ENCODE measurements at regions of chr5 and their contacts with region 1.

Region 1: DNA sequence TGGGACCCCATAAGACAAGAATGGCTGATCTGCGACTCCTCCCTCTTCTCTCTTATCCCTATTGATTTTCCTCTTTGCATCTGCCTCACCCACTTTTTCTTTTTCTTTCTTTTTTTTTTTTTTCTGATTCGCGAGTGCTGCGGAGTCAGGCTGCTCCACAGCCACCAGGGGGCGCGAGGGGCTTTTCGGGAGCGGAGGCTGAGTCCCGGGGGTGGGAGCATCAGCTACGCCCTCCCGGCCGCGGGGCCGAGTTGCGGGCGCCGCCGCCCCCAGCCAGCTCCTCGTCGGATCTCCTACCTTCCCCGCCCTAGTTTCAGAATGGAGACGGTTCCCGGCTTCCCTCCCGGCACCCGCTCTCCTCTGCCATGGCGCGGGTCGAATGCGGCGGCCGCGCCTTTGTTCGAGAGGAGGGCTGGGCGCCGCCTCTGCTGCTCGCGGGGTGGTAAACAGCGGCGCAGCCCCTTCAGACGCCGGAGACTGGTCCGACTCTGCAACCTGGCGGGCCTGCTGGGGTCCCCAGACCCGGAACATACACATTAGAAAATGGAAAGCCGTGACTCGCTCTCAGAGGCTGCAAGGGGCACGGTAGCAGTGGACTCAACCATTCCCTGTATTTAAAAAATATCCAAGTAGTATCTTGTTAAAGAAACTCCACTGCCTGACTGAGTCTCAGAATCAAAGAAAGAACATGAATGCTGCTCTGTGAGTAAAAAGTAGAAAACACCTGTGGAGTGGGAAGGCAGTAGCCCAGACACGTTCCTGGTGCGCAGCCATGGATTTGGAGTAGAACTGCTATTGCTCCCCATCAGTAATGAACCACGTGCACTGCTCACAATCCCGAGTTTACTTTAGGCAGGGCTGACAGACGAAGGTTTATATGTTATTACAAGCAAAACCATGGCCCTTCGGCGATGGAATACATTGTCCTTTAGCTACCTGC is 55.7 kb downstream of the DPYSL3 start:
- DNase-seq: peak; percentile 50 to 90 (median 75)
- H3K4me3 ChIP-seq: peak overlapping the region; percentile 57 to 99 (median 77)
- H3K27ac ChIP-seq: peak overlapping the region in 53 of 59 donors; percentile 1 to 90 (median 75)
- H3K27me3 ChIP-seq: peaks cover 0 to 6% (median 0%) of the 10 kb centered on the region in 45 donors
- CTCF ChIP-seq: peak; percentile 65 to 96 (median 84)

Region 2: DNA sequence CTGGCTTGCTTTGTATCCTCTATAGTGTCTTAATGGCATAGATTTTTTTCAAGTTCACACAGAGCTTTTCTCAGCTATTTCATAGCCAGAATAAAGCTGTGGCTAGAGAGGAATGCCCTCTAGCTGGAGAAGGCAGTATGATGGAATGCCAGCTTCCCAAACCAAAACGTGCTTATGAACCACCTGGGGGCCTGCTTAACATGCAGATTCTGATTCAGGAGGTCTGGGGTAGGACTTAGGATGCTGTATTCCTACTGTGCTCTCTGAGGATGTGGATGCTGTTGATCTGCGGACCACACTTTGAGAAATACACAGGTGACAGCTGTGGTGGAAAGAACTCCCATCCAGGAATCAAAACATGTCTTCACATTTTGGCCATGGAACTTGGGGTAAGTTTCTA is 105.6 kb after region 1 on chr5:
- intact Hi-C with region 1: loop called (anchors 5 kb)
- DNase-seq: no peak
- H3K4me3 ChIP-seq: no peak overlapping the region
- H3K27ac ChIP-seq: no peak overlapping the region
- H3K27me3 ChIP-seq: no peaks in the 10 kb centered on the region
- CTCF ChIP-seq: peak in 13 of 56 donors; percentile 3 to 39 (median 15)

Region 3: DNA sequence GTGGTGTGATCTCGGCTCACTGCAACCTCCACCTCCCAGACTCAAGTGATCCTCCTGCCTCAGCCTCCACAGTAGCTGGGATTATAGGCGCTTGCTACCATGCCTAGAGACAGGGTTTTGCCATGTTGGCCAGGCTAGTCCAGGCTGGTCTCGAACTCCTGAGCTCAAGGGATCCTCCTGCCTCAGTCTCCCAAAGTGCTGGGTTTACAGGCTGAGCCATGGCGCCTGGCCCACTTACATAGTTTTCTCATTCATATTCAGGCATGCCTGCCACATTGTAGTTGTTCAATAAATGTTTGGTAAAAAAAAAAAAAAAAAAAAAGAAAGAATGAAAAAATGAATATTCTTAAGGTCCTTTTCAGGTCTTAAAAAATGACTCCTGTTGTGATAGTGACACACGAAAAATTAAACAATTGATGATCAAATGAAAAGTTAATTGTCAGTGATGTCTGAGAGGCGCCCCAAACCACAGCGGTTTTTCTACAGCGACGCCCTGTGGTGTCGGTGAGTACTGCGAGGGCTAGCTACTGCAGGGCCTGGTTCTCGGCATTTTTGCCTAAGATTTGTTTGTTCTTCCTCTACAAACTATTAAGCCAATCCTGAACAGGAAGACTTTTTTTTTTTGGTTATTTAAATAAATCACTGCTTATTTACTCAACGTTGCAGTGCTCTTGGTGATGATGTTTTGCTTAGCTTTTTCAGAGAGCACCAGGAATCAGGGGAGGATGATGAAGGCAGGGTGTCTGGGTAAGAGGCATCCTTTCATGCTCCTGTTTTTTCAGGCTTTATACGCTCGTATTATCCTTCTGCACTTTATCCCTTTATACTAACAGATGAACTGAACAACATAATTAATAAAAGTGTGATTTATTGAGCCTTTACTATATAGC is 122.7 kb after region 1 on chr5:
- intact Hi-C with region 1: loop called (anchors 2 to 5 kb)
- DNase-seq: peak in 9 of 10 donors; percentile 14 to 75 (median 50)
- H3K4me3 ChIP-seq: no peak overlapping the region
- H3K27ac ChIP-seq: no peak overlapping the region
- H3K27me3 ChIP-seq: no peaks in the 10 kb centered on the region
- CTCF ChIP-seq: peak; percentile 52 to 87 (median 81)

Region 4: DNA sequence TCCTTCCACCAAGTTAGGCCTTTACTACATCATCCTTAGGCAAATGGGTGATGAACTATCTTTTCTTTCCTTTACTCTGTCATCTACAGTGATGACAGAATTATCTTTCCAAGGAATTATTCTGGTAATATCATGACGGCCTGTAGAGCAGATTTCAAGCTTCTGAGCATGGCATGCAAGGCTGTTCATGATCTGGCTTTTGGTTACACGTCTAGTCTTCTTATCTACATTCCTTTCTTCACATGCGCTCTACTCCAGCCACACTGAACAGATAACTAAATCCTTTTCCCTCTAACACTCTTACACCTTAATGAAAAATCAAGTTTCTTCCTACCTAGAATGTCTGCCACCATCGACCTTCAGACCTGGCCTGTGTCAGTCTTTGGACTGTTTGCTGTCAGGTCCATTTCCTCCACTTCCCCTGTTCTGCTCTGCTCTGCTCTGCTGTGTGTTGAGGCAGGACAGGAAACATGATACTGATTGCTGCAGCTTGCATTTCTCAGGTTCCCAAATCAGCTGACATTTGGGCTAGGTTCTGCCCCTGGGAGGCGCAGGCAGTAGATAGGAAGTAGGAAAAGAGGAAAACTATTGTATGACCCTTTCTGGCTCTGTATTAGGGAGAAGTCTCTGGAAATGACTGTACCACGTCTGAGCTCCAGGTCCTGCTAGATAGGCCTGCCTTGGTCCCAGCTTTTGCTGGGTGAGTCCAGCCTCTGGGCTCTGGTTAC is 428.6 kb after region 1 on chr5:
- intact Hi-C with region 1: no loop called
- DNase-seq: no peak
- H3K4me3 ChIP-seq: no peak overlapping the region
- H3K27ac ChIP-seq: no peak overlapping the region
- H3K27me3 ChIP-seq: peaks cover 0 to 7% (median 0%) of the 10 kb centered on the region in 45 donors
- CTCF ChIP-seq: no peak

Region 5: GRCh38 chr5:148290271-148291195 is 836.4 kb after region 1 on chr5:
- intact Hi-C with region 1: no loop called
- DNase-seq: no peak
- H3K4me3 ChIP-seq: peak overlapping the region in 8 of 59 donors; percentile 2 to 33 (median 10)
- H3K27ac ChIP-seq: peak overlapping the region in 33 of 59 donors; percentile 0 to 80 (median 41)
- H3K27me3 ChIP-seq: no peaks in the 10 kb centered on the region
- CTCF ChIP-seq: peak in 55 of 56 donors; percentile 15 to 72 (median 49)

Measured in dorsolateral prefrontal cortex (tissue), 120 donors.